PC-9 (cell line): ENCODE measurements at regions of chr3 and their contacts with region 1.

Region 1: DNA sequence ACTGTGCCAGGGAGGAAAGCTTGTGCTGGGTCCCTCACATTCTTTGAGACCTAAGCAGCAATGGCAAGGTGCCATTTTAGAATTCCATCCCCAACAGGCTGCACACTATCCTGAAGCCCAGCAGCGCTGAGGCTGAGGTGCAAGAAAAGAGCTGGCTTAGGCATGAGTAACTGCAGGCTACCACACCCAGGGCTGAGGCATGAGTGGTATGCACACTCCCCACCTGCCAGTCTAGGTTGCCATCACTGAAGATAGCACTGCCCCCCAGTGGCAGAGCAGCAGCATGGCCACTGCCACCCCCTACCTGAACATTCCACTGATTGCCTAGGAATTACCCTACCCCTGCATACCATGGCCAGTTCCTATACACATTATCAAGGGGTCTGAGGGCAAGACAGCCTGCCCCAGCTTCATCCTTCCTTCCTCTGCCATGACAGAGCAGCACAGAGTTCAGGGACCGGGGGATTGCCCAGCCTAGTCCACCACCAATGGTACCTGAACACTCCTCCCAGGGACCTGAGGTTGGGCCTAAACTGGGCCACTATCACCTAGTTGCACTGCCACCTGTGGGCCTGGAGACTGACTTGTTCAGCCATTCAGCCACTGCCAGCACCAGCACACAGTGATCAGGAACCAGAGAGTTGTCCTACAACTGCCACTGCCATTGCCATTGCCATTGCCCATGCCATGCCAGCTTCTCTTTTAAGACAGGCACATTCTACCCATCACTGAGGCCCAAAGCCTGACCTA is 129.8 kb downstream of the SATB1 start:
- DNase-seq: peak; percentile 86 to 90
- H3K4me3 ChIP-seq: no peak overlapping the region
- H3K27ac ChIP-seq: peak overlapping the region; percentile 11; the same call in 1 of the 2 replicates
- H3K4me1 ChIP-seq: peaks cover 9% of the 10 kb centered on the region
- H3K27me3 ChIP-seq: no peaks in the 10 kb centered on the region
- CTCF ChIP-seq: peak; percentile 89

Region 2: GRCh38 chr3:17258823-17259436 is 1036.4 kb before region 1 on chr3:
- CTCF ChIA-PET with region 1: no interaction called
- POLR2A ChIA-PET with region 1: no interaction called
- intact Hi-C with region 1: loop called (anchors 5 kb)
- DNase-seq: no peak
- H3K4me3 ChIP-seq: no peak overlapping the region
- H3K27ac ChIP-seq: no peak overlapping the region
- H3K4me1 ChIP-seq: no peaks in the 10 kb centered on the region
- H3K27me3 ChIP-seq: no peaks in the 10 kb centered on the region
- CTCF ChIP-seq: peak; percentile 88

Region 3: DNA sequence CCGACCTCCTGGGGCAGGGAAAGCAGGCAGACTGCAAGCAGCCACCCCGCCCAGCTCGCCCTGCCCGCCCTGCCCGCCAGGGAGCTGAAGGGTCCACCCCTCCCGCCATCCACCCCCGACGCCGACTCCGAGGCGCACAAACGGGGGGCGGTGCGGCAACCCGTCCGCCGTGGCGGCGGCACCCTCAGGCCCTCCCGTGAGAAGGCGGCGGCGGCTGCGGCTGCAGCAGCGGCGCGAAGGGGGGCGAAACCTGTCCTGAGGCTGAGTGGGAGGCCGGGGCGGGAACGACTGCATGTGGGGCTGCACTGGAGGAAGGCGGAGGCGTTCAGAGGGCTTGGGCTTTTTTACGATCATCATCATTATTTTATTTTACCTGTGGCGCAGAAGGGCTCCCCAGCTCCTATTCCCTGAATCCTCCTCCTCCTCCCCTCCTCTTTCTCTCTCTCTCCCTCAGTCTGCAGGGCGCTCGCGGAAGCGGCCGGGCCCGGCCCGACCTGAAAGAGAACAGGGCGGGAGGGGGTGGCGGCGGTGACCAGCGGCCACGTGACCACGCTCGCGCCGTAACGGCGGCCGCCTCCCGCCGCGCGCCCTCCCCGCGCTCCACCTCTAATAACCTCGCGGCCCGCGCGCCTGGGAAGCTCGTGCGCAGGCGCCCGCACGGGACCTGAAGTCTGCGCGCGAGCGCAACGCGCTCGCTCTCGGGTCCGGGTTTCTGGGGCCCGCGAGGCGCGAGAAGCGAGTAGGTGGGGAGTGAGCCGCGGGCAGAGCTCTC is 553.1 kb before region 1 on chr3 and contains the start of gene TBC1D5:
- CTCF ChIA-PET with region 1: no interaction called
- POLR2A ChIA-PET with region 1: no interaction called
- intact Hi-C with region 1: loop called (anchors 1 kb)
- DNase-seq: peak; percentile 85 to 97
- H3K4me3 ChIP-seq: peak within 1 kb of the TSS; percentile 70
- H3K27ac ChIP-seq: peak within 1 kb of the TSS; percentile 95
- H3K4me1 ChIP-seq: peaks cover 30% of the 10 kb centered on the region
- H3K27me3 ChIP-seq: no peaks in the 10 kb centered on the region
- CTCF ChIP-seq: no peak; the same call in 1 of the 2 replicates
- total RNA-seq, gene TBC1D5: 41.2 and 54.0 TPM in 2 replicates

Region 4: DNA sequence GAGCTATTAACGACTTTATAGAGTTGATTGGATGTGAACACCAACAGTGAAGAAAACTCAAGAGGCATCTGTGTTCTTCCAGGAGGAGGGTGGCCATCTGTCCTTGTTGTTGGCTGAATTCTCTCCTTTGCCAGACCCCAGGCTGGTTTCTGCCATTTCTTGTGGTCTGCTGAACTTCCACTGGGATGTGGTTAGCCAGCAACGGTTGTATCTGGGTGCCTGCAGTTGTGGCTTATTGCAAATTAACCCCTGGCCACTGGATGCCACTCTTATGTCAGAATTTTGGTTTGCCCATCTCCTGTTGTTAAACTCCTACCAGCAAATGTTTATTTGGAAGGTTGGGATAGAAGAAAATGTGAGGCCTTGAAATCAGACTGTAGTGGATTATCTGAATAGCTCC is 389.4 kb before region 1 on chr3:
- CTCF ChIA-PET with region 1: no interaction called
- POLR2A ChIA-PET with region 1: no interaction called
- intact Hi-C with region 1: loop called (anchors 5 kb)
- DNase-seq: no peak
- H3K4me3 ChIP-seq: no peak overlapping the region
- H3K27ac ChIP-seq: no peak overlapping the region
- H3K4me1 ChIP-seq: no peaks in the 10 kb centered on the region
- H3K27me3 ChIP-seq: no peaks in the 10 kb centered on the region
- CTCF ChIP-seq: no peak

Region 5: GRCh38 chr3:18208856-18209255 is 86.5 kb before region 1 on chr3:
- CTCF ChIA-PET with region 1: interaction called, 14 read pairs
- POLR2A ChIA-PET with region 1: no interaction called
- intact Hi-C with region 1: no loop called
- DNase-seq: no peak
- H3K4me3 ChIP-seq: no peak overlapping the region
- H3K27ac ChIP-seq: no peak overlapping the region
- H3K4me1 ChIP-seq: no peaks in the 10 kb centered on the region
- H3K27me3 ChIP-seq: no peaks in the 10 kb centered on the region
- CTCF ChIP-seq: no peak

Region 6: GRCh38 chr3:18419232-18419631 is 123.9 kb after region 1 on chr3:
- CTCF ChIA-PET with region 1: no interaction called
- POLR2A ChIA-PET with region 1: no interaction called
- intact Hi-C with region 1: no loop called
- DNase-seq: no peak
- H3K4me3 ChIP-seq: no peak overlapping the region
- H3K27ac ChIP-seq: no peak overlapping the region
- H3K4me1 ChIP-seq: peaks cover 10% of the 10 kb centered on the region
- H3K27me3 ChIP-seq: no peaks in the 10 kb centered on the region
- CTCF ChIP-seq: no peak

Region 7: GRCh38 chr3:18758047-18758704 is 462.8 kb after region 1 on chr3:
- CTCF ChIA-PET with region 1: interaction called, 3 read pairs
- POLR2A ChIA-PET with region 1: no interaction called
- intact Hi-C with region 1: loop called (anchors 5 kb)
- DNase-seq: peak; percentile 46 to 85
- H3K4me3 ChIP-seq: no peak overlapping the region
- H3K27ac ChIP-seq: peak overlapping the region; percentile 38; the same call in 1 of the 2 replicates
- H3K4me1 ChIP-seq: peaks cover 17% of the 10 kb centered on the region
- H3K27me3 ChIP-seq: no peaks in the 10 kb centered on the region
- CTCF ChIP-seq: peak; percentile 94